K562 (cell line): ENCODE measurements at regions of chr16 and their contacts with region 1.

Region 1: GRCh38 chr16:10971560-10971961 is 27.2 kb downstream of the CLEC16A start:
- DNase-seq: peak; percentile 35 to 83 (median 50)
- ATAC-seq: peak; percentile 68
- H3K4me3 ChIP-seq: no peak overlapping the region
- H3K27ac ChIP-seq: peak overlapping the region; percentile 63; the same call in 1 of the 3 replicates
- H3K4me1 ChIP-seq: peaks cover 19 to 22% of the 10 kb centered on the region in 2 experiments
- H3K27me3 ChIP-seq: no peaks in the 10 kb centered on the region
- CTCF ChIP-seq: peak; percentile 68 to 92 (median 69)
- EP300 ChIP-seq: no peak; the same call in 1 of the 2 replicates
- POLR2A ChIP-seq: no peak
- RAD21 ChIP-seq: peak; percentile 92 to 96

Region 2: DNA sequence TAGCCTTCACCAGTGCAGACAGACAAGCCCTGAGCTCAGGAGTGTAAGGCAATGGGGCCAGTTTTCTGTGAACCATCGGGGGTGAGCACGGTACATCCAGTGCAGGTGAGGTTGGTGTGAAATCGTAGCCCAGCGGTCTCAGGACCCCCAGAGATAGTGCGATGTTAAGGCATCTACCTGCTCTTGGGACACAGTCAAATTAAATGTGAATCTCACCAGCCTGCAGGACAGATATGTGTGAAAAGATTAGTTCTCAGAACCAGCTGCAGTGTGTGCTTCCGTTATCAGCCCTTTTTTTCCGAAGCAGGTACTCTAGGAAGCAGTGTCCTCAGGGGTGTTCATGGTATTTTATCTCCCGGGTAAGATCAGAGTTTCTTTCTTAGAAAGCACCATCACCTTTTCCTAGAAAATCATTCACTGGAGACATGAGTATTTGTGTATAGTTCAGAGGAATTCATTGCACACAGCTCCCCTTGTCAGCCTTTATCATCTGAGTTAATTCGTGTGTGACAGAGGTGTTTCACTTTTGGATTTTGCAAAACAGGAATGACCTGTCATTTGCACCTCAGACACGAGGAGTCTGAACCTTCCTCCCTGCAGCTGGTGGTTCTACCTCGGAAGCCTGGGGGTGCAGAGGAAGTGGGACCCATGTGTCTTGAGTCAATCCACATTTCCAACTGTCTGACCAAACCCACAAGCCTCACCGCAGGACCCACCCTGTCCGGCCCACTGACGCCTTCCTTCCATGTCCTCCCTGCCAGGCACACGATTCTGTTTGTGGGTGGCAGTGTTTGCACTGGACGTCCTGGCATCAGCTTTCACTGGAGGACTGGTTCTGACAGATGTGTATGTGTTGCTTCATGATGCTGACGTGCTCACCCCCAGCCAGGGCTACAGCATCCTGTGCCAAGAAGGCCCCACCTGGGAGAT is 80.6 kb after region 1 on chr16:
- CTCF ChIA-PET with region 1: no interaction called
- POLR2A ChIA-PET with region 1: no interaction called
- in situ Hi-C with region 1: no loop called
- intact Hi-C with region 1: no loop called
- DNase-seq: peak in 2 of 4 experiments; percentile 41 to 55
- ATAC-seq: peak; percentile 36
- H3K4me3 ChIP-seq: no peak overlapping the region
- H3K27ac ChIP-seq: no peak overlapping the region
- H3K4me1 ChIP-seq: peaks cover 8 to 22% of the 10 kb centered on the region in 2 experiments
- H3K27me3 ChIP-seq: no peaks in the 10 kb centered on the region
- CTCF ChIP-seq: no peak
- EP300 ChIP-seq: peak; percentile 75
- POLR2A ChIP-seq: no peak
- RAD21 ChIP-seq: peak in 1 of 2 experiments; percentile 20; a peak in 1 of 4 replicates

Region 3: DNA sequence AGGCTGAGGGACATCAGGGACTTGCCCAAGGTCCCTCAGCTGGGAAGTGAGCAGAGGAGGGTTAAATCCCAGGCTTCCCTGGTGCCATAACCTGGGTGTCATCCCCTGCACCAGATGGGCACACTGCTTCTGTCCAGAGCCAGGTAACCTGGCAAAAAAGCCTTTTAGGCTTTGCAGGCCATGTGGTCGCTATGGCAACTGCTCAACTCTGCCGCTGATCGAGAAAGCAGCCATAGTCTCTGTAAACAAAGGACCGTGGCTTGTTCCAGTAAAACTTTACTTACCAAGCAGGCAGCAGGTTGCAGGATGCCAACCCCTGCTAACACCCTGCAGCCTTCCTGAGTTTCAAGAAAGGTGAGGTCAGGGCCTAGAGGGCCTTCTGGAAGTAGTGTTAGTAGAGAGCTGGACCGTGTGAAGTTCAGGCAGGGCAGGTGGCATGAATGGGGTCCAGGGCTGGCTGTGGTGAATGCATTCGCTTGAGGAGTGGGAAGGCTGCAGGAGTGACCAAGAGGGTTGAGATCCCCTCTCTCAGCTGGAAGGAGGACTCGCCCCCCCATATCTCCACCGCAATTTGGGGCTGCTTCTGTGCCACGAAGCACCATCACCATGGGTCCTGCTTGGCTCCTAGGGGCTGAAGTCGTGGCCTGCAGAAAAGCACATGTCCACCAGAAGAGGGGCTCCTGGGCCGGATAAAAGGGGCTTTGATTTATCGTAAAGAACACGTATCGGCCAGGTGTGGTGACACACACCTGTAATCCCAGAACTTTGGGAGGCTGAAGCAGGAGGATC is 193.1 kb after region 1 on chr16:
- CTCF ChIA-PET with region 1: no interaction called
- POLR2A ChIA-PET with region 1: no interaction called
- in situ Hi-C with region 1: no loop called
- intact Hi-C with region 1: loop called (anchors 5 kb)
- DNase-seq: no peak
- ATAC-seq: no peak
- H3K4me3 ChIP-seq: no peak overlapping the region
- H3K27ac ChIP-seq: no peak overlapping the region
- H3K4me1 ChIP-seq: peaks cover 38 to 51% of the 10 kb centered on the region in 2 experiments
- H3K27me3 ChIP-seq: no peaks in the 10 kb centered on the region
- CTCF ChIP-seq: no peak
- EP300 ChIP-seq: no peak
- POLR2A ChIP-seq: no peak
- RAD21 ChIP-seq: no peak

Region 4: DNA sequence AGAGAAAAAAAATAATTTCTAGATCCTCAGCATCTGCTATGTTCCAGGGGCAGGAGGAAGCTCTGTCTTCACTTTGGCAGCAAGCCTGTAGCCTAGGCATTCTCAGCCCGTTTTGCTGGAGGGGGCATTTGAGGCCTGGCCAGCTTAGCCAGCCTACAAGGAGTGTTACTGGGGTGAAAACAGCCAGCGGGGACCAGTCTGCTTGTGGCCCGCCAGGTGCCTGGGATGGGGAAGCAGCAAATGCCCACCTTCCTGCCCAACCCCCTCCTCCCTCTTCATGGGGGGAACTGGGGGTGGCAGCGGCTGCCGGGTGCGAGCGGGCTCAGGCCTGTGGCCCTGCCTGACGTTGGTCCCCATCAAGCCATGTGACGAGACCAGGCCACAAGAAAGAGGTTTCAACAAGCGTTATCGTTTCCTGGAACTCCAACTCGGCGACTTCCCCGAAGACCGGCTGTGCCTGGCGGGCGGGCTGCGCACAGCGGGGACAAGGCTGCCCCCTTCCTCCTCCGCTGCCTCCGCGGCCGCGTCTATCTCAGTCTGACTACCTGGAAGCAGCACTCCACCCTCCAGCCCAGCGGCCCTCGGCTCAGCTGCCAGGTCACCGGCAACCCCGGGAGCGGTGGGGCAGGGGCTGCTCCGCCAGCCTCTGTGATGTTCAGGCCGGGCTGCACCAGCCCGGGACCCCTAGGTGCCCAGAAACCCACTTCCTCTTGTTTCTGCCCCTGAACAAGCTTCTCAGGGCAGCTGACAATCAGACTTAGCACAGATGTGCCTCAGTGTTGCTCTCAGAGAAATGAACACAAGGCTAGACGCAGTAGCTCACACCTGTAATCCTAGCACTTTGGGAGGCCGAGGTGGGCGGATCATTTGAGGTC is 261.5 kb after region 1 on chr16:
- CTCF ChIA-PET with region 1: interaction called, 4 read pairs
- POLR2A ChIA-PET with region 1: no interaction called
- in situ Hi-C with region 1: no loop called
- intact Hi-C with region 1: loop called (anchors 1 kb)
- DNase-seq: peak; percentile 77 to 98 (median 83)
- ATAC-seq: peak; percentile 96
- H3K4me3 ChIP-seq: no peak overlapping the region
- H3K27ac ChIP-seq: peak overlapping the region; percentile 95
- H3K4me1 ChIP-seq: peaks cover 40 to 47% of the 10 kb centered on the region in 2 experiments
- H3K27me3 ChIP-seq: no peaks in the 10 kb centered on the region
- CTCF ChIP-seq: peak; percentile 24 to 33 (median 31); a peak in 3 of 6 replicates
- EP300 ChIP-seq: peak; percentile 90
- POLR2A ChIP-seq: peak; percentile 67
- RAD21 ChIP-seq: peak; percentile 39 to 60; a peak in 3 of 4 replicates

Region 5: DNA sequence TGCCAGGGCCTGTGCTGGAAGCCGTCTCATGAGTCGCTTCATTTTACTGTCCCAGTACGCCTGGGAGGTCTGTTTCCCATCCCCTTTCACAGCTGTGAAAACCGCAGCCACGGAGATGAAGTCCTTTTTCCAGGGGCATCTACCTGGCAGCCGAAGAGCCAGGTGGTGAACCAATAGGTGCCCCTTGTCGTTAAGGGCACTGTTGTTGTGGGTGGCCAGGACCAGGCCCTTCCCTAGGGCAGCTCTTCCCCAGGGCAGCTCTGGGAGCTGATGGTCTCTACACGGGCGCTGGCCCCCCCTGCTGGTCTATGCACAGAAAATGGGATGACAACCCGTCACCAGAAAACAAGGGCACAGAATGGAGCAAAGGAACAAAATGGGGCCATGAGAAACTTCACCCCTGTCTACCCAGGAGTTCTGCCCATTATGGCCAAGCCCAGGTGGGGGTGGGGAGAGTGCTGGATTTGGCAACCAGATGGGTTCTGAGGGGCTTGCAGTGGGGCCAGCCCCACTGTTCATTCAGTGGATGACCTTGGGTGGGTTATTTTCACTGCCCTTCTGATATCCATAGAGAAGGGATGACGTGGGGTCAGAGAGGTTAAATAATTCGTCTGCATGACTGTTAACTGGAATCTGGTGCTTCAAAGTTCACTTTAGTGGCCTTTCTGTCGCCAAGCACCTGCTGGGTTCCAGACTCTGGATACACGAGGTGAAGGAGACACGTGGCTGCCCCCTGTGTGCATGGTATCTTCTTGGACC is 385.2 kb after region 1 on chr16:
- CTCF ChIA-PET with region 1: interaction called, 24 read pairs
- POLR2A ChIA-PET with region 1: interaction called, 3 read pairs
- in situ Hi-C with region 1: loop called (anchors 5 kb)
- intact Hi-C with region 1: loop called (anchors 2 kb)
- DNase-seq: peak; percentile 75 to 82 (median 78)
- ATAC-seq: peak; percentile 90
- H3K4me3 ChIP-seq: no peak overlapping the region
- H3K27ac ChIP-seq: no peak overlapping the region; the same call in 2 of the 3 replicates
- H3K4me1 ChIP-seq: peaks cover 8 to 39% of the 10 kb centered on the region in 2 experiments; a peak in 4 of 5 replicates
- H3K27me3 ChIP-seq: no peaks in the 10 kb centered on the region
- CTCF ChIP-seq: peak; percentile 77 to 88 (median 84)
- EP300 ChIP-seq: no peak
- POLR2A ChIP-seq: no peak
- RAD21 ChIP-seq: peak; percentile 77 to 84

Region 6: DNA sequence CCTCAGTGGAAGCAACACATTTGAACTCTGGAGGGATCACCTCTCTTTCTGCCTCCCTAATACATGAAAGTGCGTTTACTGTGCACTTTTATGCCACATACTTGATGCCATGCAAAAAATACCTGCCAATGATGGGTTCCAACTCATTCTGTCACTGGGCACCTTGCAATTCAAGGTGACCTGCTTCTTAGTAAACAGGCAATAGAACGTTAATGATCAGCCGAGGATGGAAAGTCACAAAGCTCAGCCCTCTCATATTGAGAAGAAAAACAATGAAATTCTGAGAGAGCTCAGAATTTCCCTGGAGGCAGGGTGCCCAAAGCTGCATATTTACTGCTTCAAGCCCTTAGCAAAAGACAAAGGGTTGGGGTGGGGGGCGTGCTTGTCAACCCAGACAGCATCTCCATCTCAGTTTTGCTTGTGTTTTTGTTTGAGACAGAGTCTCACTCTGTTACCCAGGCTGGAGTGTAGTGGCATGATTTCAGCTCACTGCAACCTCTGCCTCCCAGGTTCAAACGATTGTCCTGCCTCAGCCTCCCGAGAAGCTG is 592.0 kb after region 1 on chr16:
- CTCF ChIA-PET with region 1: no interaction called
- POLR2A ChIA-PET with region 1: no interaction called
- in situ Hi-C with region 1: no loop called
- intact Hi-C with region 1: no loop called
- DNase-seq: no peak
- ATAC-seq: no peak
- H3K4me3 ChIP-seq: no peak overlapping the region
- H3K27ac ChIP-seq: no peak overlapping the region
- H3K4me1 ChIP-seq: no peaks in the 10 kb centered on the region; a peak in 1 of 5 replicates
- H3K27me3 ChIP-seq: peaks cover 0 to 22% of the 10 kb centered on the region in 2 experiments; a peak in 3 of 5 replicates
- CTCF ChIP-seq: no peak
- EP300 ChIP-seq: no peak
- POLR2A ChIP-seq: no peak
- RAD21 ChIP-seq: no peak